Transverse colon (tissue), 4 donors: ENCODE measurements at regions of chr7 and their contacts with region 1.

Region 1: DNA sequence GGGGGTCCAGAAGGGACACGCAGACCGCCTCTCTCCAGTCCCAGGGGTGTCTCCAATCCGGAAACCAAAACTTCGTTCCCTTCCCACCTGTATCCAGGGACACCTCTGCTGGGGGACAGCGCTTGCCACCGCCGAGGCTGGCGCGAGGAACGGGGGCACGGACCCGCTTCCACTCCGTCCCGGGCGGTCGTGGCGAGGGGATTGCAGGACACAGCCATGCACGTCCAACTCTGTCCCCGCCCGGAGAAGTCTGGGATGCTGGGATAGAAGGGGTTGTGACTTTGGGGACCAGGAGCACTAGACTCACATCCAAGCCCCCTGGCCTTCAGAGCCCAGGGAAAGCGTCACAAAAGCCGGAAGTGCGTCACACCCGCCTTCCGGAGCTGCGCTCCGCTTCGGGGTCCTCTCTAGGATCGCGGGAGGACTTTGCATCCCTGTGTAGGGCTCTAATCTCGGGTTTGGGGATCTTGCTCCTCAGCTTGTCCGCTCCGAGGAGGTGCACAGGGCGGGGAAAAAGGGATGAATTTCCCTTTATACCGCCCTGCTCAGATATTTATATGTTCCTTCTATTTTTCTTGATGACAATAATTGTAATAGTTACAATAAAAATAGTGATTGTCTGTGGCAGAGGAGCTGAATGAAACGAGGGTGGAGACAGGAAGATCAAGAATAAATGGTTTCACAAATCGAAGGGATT is at the start of gene FAM200A:
- DNase-seq: peak; percentile 90
- H3K4me3 ChIP-seq: peak within 1 kb of the TSS; percentile 72 to 96 (median 78)
- H3K27ac ChIP-seq: peak within 1 kb of the TSS; percentile 79 to 86 (median 84)
- H3K4me1 ChIP-seq: peaks cover 2 to 23% (median 10%) of the 10 kb centered on the region in 4 donors
- H3K27me3 ChIP-seq: no peaks in the 10 kb centered on the region
- CTCF ChIP-seq: no peak
- EP300 ChIP-seq: no peak
- POLR2A ChIP-seq: peak; percentile 81
- total RNA-seq, gene FAM200A: 0.40 to 4.2 (median 4.1) TPM in 3 of 4 donors, not detected in the other

Region 2: GRCh38 chr7:98137826-98138151 is 1414.1 kb before region 1 on chr7:
- in situ Hi-C with region 1: no loop called
- intact Hi-C with region 1: no loop called
- DNase-seq: no peak
- H3K4me3 ChIP-seq: no peak overlapping the region
- H3K27ac ChIP-seq: no peak overlapping the region
- H3K4me1 ChIP-seq: peaks cover 14 to 34% (median 21%) of the 10 kb centered on the region in 4 donors
- H3K27me3 ChIP-seq: no peaks in the 10 kb centered on the region
- CTCF ChIP-seq: no peak
- EP300 ChIP-seq: no peak
- POLR2A ChIP-seq: no peak

Region 3: GRCh38 chr7:99504603-99505323 is 47.2 kb before region 1 on chr7 and contains the start of gene ZKSCAN5:
- in situ Hi-C with region 1: loop called in 1 of 4 experiments (anchors 10 kb)
- intact Hi-C with region 1: no loop called
- DNase-seq: peak; percentile 99
- H3K4me3 ChIP-seq: peak within 1 kb of the TSS; percentile 59 to 88 (median 78)
- H3K27ac ChIP-seq: peak within 1 kb of the TSS; percentile 89 to 98 (median 90)
- H3K4me1 ChIP-seq: peaks cover 11 to 37% (median 29%) of the 10 kb centered on the region in 4 donors
- H3K27me3 ChIP-seq: no peaks in the 10 kb centered on the region
- CTCF ChIP-seq: peak in 1 of 5 experiments; percentile 13
- EP300 ChIP-seq: no peak
- POLR2A ChIP-seq: peak; percentile 81
- total RNA-seq, gene ZKSCAN5: 4.5 to 8.7 (median 5.9) TPM

Region 4: GRCh38 chr7:99514050-99514449 is 37.9 kb before region 1 on chr7:
- in situ Hi-C with region 1: loop called in 1 of 4 experiments (anchors 10 kb)
- intact Hi-C with region 1: loop called (anchors 2 kb)
- DNase-seq: no peak
- H3K4me3 ChIP-seq: no peak overlapping the region
- H3K27ac ChIP-seq: no peak overlapping the region
- H3K4me1 ChIP-seq: no peaks in the 10 kb centered on the region
- H3K27me3 ChIP-seq: no peaks in the 10 kb centered on the region
- CTCF ChIP-seq: no peak
- EP300 ChIP-seq: no peak
- POLR2A ChIP-seq: no peak

Region 5: DNA sequence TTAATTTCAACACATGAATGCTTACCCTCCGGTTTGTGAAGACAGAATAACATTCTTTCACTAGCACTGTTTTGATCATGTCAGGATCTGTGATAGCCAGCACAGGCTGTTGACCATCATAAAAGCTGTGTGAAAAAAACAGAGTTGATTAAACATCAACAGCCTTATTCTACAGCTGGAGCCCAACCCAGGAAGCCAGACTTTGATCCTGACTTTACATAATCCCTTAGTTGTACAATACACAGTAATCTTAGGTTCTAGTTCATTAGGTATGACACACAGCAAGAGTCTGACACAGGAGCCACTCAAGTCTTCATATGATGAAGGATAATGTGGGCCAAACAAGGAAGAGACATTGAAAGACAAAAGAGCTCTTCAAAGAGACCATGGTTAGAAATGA is 220.7 kb after region 1 on chr7:
- in situ Hi-C with region 1: no loop called
- intact Hi-C with region 1: no loop called
- DNase-seq: peak; percentile 57
- H3K4me3 ChIP-seq: no peak overlapping the region
- H3K27ac ChIP-seq: peak overlapping the region; percentile 65 to 80 (median 73)
- H3K4me1 ChIP-seq: peaks cover 0 to 19% (median 9%) of the 10 kb centered on the region in 4 donors
- H3K27me3 ChIP-seq: no peaks in the 10 kb centered on the region
- CTCF ChIP-seq: no peak
- EP300 ChIP-seq: no peak
- POLR2A ChIP-seq: peak; percentile 26